ENCODE measurements at regions of chr4 and their contacts with region 1.

Region 1: DNA sequence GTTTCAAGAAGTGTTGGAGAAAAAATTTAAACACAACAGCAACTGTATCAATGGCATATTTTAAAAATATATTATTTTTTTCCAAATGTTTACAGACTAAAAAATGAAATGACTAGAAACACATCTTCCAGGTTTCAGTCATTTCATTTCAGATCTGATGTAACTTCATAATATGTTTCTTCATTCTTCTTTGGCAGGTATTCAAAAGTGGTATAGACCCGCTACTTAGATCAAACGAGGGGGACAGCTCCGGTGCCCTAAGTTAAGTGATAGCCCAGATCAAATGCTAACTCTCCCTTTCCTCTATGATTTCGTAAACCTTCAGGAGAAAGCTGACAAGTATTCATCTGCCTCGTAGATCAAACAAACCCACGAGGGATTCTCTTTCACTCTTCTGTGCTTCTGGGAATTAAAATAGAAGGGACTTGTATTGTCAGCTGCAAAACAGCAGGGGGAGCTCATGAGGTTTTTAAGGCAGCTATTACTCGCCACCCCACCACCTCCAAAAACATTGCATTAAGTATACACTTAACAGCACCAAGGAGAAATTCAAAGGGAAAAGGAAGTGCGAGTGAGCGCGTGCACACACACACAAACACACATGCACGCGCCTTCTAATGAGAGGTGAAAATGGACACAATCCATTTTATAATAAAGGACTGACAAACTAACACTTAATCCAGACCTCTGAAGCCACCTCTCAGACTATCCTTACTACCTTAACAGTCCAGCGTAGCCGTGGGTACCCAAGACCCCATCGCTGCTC is 21.4 kb downstream of the HELT start:
- DNase-seq: peak; percentile 73
- ATAC-seq: peak; percentile 86
- H3K4me3 ChIP-seq: no peak overlapping the region
- H3K4me3 Mint-ChIP-seq: peak overlapping the region; percentile 16
- H3K27ac ChIP-seq: no peak overlapping the region
- H3K27ac Mint-ChIP-seq: no peak overlapping the region
- H3K4me1 ChIP-seq: peaks cover 0 to 5% of the 10 kb centered on the region in 2 donors
- H3K4me1 Mint-ChIP-seq: peaks cover 5% of the 10 kb centered on the region
- H3K27me3 ChIP-seq: peaks cover 0 to 3% (median 0%) of the 10 kb centered on the region in 4 experiments
- H3K27me3 Mint-ChIP-seq: peaks cover 28% of the 10 kb centered on the region
- CTCF ChIP-seq: peak; percentile 87

Region 2: DNA sequence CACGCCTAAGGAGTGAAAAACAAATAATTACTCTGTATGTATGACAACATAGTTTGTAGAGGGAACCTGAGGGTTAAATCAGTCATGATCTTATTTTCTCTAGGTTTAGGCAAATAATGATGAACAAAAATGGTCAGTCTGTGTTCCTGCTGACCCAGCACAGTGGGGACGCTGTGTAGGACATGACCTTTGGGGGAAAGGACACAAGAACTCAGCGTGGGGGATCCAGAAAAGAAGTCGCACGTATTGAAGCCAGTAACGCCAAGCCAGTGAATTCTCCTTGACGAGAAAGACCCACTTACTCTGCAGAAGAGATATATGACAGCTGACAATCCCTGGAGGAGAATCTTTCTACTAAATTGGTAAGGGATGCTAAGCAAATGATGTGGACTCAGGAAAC is 15.2 kb after region 1 on chr4:
- CTCF ChIA-PET with region 1: interaction called, 17 read pairs
- POLR2A ChIA-PET with region 1: no interaction called
- intact Hi-C with region 1: no loop called
- DNase-seq: no peak
- ATAC-seq: no peak
- H3K4me3 ChIP-seq: no peak overlapping the region
- H3K4me3 Mint-ChIP-seq: no peak overlapping the region
- H3K27ac ChIP-seq: no peak overlapping the region
- H3K27ac Mint-ChIP-seq: no peak overlapping the region
- H3K4me1 ChIP-seq: no peaks in the 10 kb centered on the region
- H3K4me1 Mint-ChIP-seq: no peaks in the 10 kb centered on the region
- H3K27me3 ChIP-seq: peaks cover 0 to 8% (median 0%) of the 10 kb centered on the region in 4 experiments
- H3K27me3 Mint-ChIP-seq: peaks cover 46% of the 10 kb centered on the region
- CTCF ChIP-seq: no peak

Region 3: GRCh38 chr4:185096032-185096653 is 56.5 kb after region 1 on chr4:
- CTCF ChIA-PET with region 1: interaction called, 11 read pairs
- POLR2A ChIA-PET with region 1: no interaction called
- intact Hi-C with region 1: loop called (anchors 2 kb)
- DNase-seq: peak; percentile 27
- ATAC-seq: no peak
- H3K4me3 ChIP-seq: no peak overlapping the region
- H3K4me3 Mint-ChIP-seq: no peak overlapping the region
- H3K27ac ChIP-seq: no peak overlapping the region
- H3K27ac Mint-ChIP-seq: no peak overlapping the region
- H3K4me1 ChIP-seq: no peaks in the 10 kb centered on the region
- H3K4me1 Mint-ChIP-seq: no peaks in the 10 kb centered on the region
- H3K27me3 ChIP-seq: peaks cover 0 to 8% (median 4%) of the 10 kb centered on the region in 4 experiments
- H3K27me3 Mint-ChIP-seq: peaks cover 17% of the 10 kb centered on the region
- CTCF ChIP-seq: peak; percentile 66

Region 4: GRCh38 chr4:185304944-185305690 is 265.4 kb after region 1 on chr4:
- CTCF ChIA-PET with region 1: interaction called, 8 read pairs
- POLR2A ChIA-PET with region 1: no interaction called
- intact Hi-C with region 1: loop called (anchors 1 kb)
- DNase-seq: peak; percentile 75
- ATAC-seq: peak; percentile 88
- H3K4me3 ChIP-seq: no peak overlapping the region
- H3K4me3 Mint-ChIP-seq: no peak overlapping the region
- H3K27ac ChIP-seq: no peak overlapping the region
- H3K27ac Mint-ChIP-seq: peak overlapping the region; percentile 4
- H3K4me1 ChIP-seq: peaks cover 18 to 30% of the 10 kb centered on the region in 2 donors
- H3K4me1 Mint-ChIP-seq: peaks cover 36% of the 10 kb centered on the region
- H3K27me3 ChIP-seq: no peaks in the 10 kb centered on the region
- H3K27me3 Mint-ChIP-seq: no peaks in the 10 kb centered on the region
- CTCF ChIP-seq: peak; percentile 70